ENCODE measurements at regions of chr1 and their contacts with region 1.

Region 1: DNA sequence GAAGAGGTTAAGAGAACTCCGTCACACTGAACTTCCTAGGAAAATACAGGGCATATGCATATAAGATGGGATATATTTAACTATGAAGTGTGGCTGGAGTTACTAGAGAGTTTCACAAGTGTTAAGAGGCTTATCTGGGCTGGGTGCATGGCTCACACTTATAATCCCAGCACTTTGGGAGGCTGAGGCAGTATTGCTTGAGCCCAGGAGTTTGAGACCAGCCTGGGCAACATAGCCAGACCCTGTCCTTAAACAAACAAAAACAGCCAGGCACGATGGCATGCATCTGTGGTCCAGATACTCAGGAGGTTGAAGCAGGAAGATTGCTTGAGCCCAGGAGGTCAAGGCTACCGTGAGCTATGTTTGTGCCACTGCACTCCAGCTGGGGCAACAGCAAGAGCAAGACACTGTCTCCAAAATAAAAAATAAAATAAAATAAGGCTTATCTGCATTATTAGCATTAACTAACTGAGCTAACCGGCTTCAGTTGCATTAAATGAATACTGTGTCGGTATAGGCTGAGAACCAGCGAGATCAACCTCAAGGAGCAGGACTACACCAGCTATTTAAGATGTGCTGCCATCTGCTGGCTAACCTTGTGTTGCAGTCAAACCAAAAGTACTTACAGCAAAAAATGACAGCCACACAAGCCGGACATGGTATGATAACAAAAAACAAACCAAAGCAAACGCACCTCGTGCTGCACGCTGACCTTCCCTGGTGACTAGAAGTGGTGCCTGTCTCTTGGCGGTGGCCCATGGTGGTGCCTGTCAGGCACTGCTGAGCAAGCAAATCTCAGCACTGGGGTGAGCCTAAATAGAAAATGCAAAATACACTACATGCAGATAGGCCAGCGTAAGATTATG is 19.7 kb upstream of the RBBP5 start:
- DNase-seq: peak; percentile 31 to 76
- ATAC-seq: peak; percentile 68 to 90 (median 82)
- H3K4me3 ChIP-seq: peak overlapping the region in 3 of 10 donors; percentile 7 to 24 (median 12)
- H3K27ac ChIP-seq: peak overlapping the region in 1 of 10 donors; percentile 21
- H3K4me1 ChIP-seq: peaks cover 0 to 33% (median 17%) of the 10 kb centered on the region in 9 donors
- H3K27me3 ChIP-seq: no peaks in the 10 kb centered on the region
- CTCF ChIP-seq: peak; percentile 57 to 89 (median 83)

Region 2: GRCh38 chr1:204826970-204827369 is 314.5 kb before region 1 on chr1:
- intact Hi-C with region 1: no loop called
- DNase-seq: no peak
- ATAC-seq: no peak
- H3K4me3 ChIP-seq: no peak overlapping the region
- H3K27ac ChIP-seq: no peak overlapping the region
- H3K4me1 ChIP-seq: peaks cover 0 to 28% (median 10%) of the 10 kb centered on the region in 9 donors
- H3K27me3 ChIP-seq: peaks cover 0 to 30% (median 0%) of the 10 kb centered on the region in 7 donors
- CTCF ChIP-seq: peak in 1 of 9 donors; percentile 26

Region 3: DNA sequence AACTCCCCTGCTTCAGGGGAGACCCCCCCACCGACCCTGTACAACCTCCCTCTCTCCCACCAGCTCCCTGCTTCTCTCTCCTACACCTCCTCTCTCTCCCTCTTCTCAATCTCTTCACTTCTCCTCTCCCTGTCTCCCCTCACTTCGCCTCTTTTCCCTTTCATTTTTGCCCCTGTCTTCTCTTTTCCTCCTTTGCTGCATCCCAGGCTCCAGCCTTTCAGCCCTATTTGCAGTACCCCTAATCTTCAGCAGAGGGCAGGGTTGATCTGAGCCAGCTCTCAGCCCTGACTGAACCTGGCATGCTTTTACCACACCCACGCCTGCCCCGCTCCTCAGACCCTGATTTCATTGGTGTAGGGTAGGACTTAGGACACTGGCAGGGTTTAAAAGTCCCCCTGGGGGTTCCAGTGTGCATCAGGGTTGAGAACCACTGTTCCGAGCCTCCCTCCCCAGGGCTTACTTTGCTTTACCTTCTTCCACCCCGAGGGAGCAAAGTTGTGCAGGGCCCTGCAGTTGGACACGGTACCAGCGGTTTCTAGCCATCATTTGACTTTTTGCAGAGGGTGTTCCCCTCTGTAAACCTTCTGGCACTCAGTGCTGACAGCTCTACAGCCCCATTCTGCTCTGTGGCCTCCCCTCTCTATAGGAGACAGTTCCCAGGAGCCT is 165.8 kb before region 1 on chr1:
- intact Hi-C with region 1: loop called in 4 of 10 experiments (anchors 5 to 10 kb)
- DNase-seq: peak in 1 of 2 donors; percentile 44
- ATAC-seq: peak in 7 of 8 donors; percentile 66 to 80 (median 73)
- H3K4me3 ChIP-seq: no peak overlapping the region
- H3K27ac ChIP-seq: no peak overlapping the region
- H3K4me1 ChIP-seq: peaks cover 0 to 27% (median 0%) of the 10 kb centered on the region in 9 donors
- H3K27me3 ChIP-seq: peaks cover 0 to 5% (median 0%) of the 10 kb centered on the region in 7 donors
- CTCF ChIP-seq: peak; percentile 58 to 88 (median 81)

Region 4: GRCh38 chr1:204989266-204990058 is 152.0 kb before region 1 on chr1:
- intact Hi-C with region 1: loop called in 5 of 10 experiments (anchors 5 to 10 kb)
- DNase-seq: peak; percentile 60 to 66
- ATAC-seq: peak; percentile 84 to 90 (median 86)
- H3K4me3 ChIP-seq: no peak overlapping the region
- H3K27ac ChIP-seq: no peak overlapping the region
- H3K4me1 ChIP-seq: peaks cover 0 to 6% (median 4%) of the 10 kb centered on the region in 9 donors
- H3K27me3 ChIP-seq: peaks cover 0 to 7% (median 5%) of the 10 kb centered on the region in 7 donors
- CTCF ChIP-seq: peak; percentile 75 to 95 (median 93)

Region 5: GRCh38 chr1:205249651-205250050 is 108.2 kb after region 1 on chr1:
- intact Hi-C with region 1: loop called in 5 of 10 experiments (anchors 5 to 10 kb)
- DNase-seq: no peak
- ATAC-seq: no peak
- H3K4me3 ChIP-seq: no peak overlapping the region
- H3K27ac ChIP-seq: no peak overlapping the region
- H3K4me1 ChIP-seq: peaks cover 12 to 38% (median 29%) of the 10 kb centered on the region in 9 donors
- H3K27me3 ChIP-seq: no peaks in the 10 kb centered on the region
- CTCF ChIP-seq: no peak

Region 6: DNA sequence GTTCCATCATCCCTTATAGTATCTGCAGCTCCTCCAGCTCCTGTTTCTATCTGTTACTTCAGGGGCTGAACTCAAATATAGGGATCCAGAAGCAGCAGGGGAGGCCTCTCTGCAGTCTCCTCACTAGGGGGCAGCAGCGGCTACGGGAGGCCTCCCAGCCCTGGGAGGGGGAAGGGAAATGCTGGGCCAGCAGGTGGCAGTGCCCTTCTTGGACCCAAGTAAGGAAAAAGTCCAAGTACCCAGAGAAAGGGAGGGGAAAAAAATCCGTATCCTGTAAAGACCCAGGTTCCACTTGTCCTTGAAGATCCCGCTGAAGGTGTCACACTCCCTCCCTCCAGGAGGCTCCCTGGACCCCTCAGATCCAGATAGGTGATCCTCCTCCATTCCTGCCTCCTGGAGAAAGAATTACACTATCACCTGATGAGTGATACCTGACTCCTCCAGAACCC is 194.2 kb after region 1 on chr1:
- intact Hi-C with region 1: loop called in 1 of 10 experiments (anchors 10 kb)
- DNase-seq: peak; percentile 69 to 70
- ATAC-seq: peak; percentile 46 to 85 (median 77)
- H3K4me3 ChIP-seq: no peak overlapping the region
- H3K27ac ChIP-seq: no peak overlapping the region
- H3K4me1 ChIP-seq: no peaks in the 10 kb centered on the region
- H3K27me3 ChIP-seq: peaks cover 0 to 4% (median 0%) of the 10 kb centered on the region in 7 donors
- CTCF ChIP-seq: peak; percentile 33 to 95 (median 84)